ENCODE measurements at regions of chr14 and their contacts with region 1.

Region 1: DNA sequence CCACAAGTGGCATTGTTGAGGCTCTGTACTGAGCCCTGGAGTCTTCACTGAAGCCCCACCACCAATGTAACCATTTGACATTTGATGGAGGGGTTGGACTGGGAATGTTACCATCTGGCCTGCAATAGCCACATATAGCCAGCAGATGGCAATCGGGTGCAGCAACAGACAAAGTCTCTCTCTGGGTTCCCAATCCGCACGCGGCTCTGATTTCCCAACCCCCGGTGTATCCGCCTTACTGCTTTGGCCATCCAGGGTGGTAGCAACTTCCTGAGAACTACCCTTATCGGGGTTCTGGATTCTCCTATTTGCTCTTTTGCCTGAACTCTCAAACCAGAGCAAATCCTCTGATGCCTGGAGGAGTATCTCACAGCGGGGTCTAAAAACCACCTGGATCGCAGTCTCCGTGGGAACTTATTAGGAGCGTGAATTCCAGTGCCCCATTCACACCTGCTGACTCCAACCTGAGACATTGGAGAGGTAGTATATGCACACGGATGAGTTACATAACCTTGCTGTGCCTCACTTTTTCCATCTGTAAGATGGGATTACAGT is 14.2 kb downstream of the VRTN start:
- DNase-seq: peak; percentile 68 to 83 (median 82)
- ATAC-seq: peak; percentile 63 to 89 (median 84)
- H3K4me3 ChIP-seq: no peak overlapping the region
- H3K27ac ChIP-seq: no peak overlapping the region
- H3K4me1 ChIP-seq: peaks cover 0 to 4% (median 0%) of the 10 kb centered on the region in 12 donors
- H3K27me3 ChIP-seq: peaks cover 0 to 14% (median 0%) of the 10 kb centered on the region in 9 donors
- CTCF ChIP-seq: peak; percentile 89 to 96 (median 94)
- POLR2A ChIP-seq: no peak

Region 2: GRCh38 chr14:74478996-74479635 is 116.7 kb after region 1 on chr14:
- intact Hi-C with region 1: loop called (anchors 1 to 5 kb)
- DNase-seq: no peak
- ATAC-seq: peak in 1 of 4 donors; percentile 30
- H3K4me3 ChIP-seq: no peak overlapping the region
- H3K27ac ChIP-seq: no peak overlapping the region
- H3K4me1 ChIP-seq: peaks cover 0 to 17% (median 5%) of the 10 kb centered on the region in 12 donors
- H3K27me3 ChIP-seq: no peaks in the 10 kb centered on the region
- CTCF ChIP-seq: peak; percentile 41 to 70 (median 62)
- POLR2A ChIP-seq: no peak

Region 3: GRCh38 chr14:74493343-74494261 is 131.2 kb after region 1 on chr14 and contains the start of gene ISCA2:
- intact Hi-C with region 1: loop called in 2 of 10 experiments (anchors 5 kb)
- DNase-seq: peak; percentile 100
- ATAC-seq: peak; percentile 95 to 98 (median 98)
- H3K4me3 ChIP-seq: peak within 1 kb of the TSS; percentile 74 to 97 (median 88)
- H3K27ac ChIP-seq: peak within 1 kb of the TSS; percentile 82 to 98 (median 92)
- H3K4me1 ChIP-seq: peaks cover 0 to 62% (median 40%) of the 10 kb centered on the region in 12 donors
- H3K27me3 ChIP-seq: no peaks in the 10 kb centered on the region
- CTCF ChIP-seq: peak in 2 of 12 donors; percentile 2 to 6
- POLR2A ChIP-seq: peak in 1 of 2 donors; percentile 55
- total RNA-seq, gene ISCA2: 10.8 to 45.8 (median 36.2) TPM

Region 4: DNA sequence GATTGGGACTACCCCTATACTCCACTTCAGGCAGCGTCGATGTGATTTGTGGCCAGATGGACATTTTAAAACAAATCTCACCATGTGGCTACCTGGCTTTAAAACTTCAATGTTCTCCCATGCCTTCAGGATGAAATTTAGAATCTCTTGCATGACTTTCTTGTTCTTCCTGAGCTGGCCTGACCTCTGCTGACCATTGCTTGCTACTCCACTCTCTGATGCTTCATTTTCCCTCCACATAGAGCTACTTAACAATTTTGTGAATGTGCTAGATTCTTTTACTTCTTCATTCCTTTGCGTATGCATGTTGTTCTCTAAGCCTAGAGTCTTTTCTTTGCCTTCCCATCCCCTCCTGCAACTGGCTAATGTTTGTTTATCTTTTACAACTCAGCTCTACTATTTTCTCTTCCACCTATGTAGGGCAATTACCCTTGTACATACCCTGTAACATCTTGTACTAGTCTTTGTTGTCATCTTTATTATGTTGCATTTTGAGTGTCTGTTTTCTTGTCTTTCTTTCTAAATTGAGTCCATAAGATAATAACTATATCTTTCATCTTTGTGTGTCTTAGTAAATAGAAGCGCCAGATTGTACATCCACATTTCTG is 441.9 kb after region 1 on chr14:
- intact Hi-C with region 1: loop called in 1 of 10 experiments (anchors 5 kb)
- DNase-seq: no peak
- ATAC-seq: peak in 2 of 4 donors; percentile 56
- H3K4me3 ChIP-seq: no peak overlapping the region
- H3K27ac ChIP-seq: no peak overlapping the region
- H3K4me1 ChIP-seq: no peaks in the 10 kb centered on the region
- H3K27me3 ChIP-seq: no peaks in the 10 kb centered on the region
- CTCF ChIP-seq: peak; percentile 19 to 64 (median 40)
- POLR2A ChIP-seq: no peak